RWPE1 (cell line): ENCODE measurements at regions of chr22 and their contacts with region 1.

Region 1: DNA sequence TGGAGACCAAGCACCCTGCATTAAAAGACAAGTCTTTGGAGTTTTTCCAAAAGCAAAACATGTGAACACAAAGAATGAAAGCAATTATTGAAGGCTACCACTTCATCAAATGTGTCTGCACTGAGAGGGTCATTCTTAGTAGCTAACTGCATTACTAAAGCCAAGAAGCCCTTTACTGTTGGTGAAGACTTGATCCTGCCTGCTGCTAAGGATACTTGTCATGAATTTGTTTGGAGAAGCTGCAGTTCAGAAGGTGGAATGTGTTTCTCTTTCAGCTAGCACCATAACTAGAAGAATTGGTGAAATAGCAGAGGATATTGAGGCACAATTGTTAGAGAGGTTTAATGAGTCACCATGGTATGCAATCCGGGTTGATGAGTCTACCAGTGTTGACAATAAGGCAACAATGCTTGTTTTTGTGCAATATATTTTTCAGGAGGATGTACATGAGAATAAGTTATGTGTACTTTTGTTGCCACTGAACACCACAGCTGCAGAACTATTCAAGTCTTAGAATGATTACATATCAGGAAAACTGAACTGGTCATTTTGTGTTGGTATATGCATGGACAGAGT is 457.3 kb upstream of the ISX start:
- DNase-seq: no peak
- H3K27ac ChIP-seq: no peak overlapping the region
- CTCF ChIP-seq: no peak

Region 2: DNA sequence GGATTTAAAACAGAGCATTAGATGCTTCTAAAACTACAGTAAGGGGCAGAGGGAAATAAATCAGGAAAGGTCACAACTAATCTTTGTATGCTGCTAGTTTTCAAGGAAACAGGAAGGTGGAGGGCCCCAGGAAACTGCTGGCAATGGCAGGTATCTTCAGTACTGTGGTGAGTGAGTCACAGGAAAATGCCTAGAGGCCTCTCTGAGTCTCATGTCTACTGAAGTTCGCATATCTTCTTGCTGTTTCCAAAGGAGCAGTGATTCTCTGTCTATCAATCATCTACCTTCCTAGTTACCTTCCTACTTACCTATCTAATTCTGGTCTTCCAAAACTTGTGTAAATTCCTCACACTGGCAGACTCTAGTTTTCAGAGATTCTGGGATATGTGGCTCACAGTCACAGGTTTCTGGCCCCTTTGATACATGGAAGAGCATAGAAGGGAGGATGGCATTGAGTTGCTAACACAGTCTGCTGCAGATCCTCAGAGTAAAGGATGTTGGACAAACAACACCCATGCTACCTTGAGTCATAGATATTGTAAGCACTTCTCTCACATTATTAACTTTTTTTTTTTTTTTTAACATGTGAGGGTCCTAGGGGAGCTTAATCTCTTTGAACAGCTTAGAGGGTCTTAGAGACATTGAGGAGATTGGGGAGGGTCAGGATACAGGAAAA is 1491.6 kb before region 1 on chr22:
- CTCF ChIA-PET with region 1: interaction called, 10 read pairs
- POLR2A ChIA-PET with region 1: no interaction called
- DNase-seq: peak; percentile 60
- H3K27ac ChIP-seq: no peak overlapping the region
- CTCF ChIP-seq: no peak

Region 3: DNA sequence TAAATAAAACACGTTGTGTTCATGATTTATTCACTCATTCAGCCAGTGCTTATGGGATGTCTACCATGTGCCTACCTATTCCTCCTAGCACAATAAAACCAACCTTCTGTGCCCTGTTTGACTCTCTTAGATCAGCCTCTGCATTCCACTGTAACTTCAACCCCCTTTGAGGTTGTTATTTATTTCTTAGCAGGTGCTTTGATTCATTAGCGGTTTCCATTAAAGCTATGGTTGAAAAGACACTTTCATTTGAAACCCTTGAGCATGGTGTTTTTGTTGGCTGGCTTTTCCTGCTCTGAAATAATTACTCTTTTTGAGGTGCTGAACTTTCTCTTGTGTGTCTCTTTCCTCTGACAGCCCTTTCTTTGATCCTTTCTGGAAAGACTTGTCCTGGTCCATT is 117.7 kb before region 1 on chr22:
- CTCF ChIA-PET with region 1: no interaction called
- POLR2A ChIA-PET with region 1: no interaction called
- DNase-seq: no peak
- H3K27ac ChIP-seq: no peak overlapping the region
- CTCF ChIP-seq: no peak